ENCODE measurements at regions of chr3 and their contacts with region 1.

Region 1: GRCh38 chr3:15098503-15099363 is at the start of gene RBSN:
- DNase-seq: peak; percentile 95 to 96
- ATAC-seq: peak; percentile 77 to 91 (median 84)
- H3K4me3 ChIP-seq: peak within 1 kb of the TSS; percentile 68 to 97 (median 86)
- H3K27ac ChIP-seq: peak within 1 kb of the TSS; percentile 18 to 93 (median 86)
- H3K4me1 ChIP-seq: peaks cover 3 to 51% (median 37%) of the 10 kb centered on the region in 9 donors
- H3K27me3 ChIP-seq: no peaks in the 10 kb centered on the region
- CTCF ChIP-seq: no peak
- total RNA-seq, gene RBSN: 17.4 to 23.8 (median 21.2) TPM

Region 2: GRCh38 chr3:15064835-15065549 is 33.7 kb before region 1 on chr3 and contains the start of gene MRPS25:
- intact Hi-C with region 1: loop called in 1 of 10 experiments (anchors 2 kb)
- DNase-seq: peak; percentile 89 to 90
- ATAC-seq: peak; percentile 96 to 98 (median 98)
- H3K4me3 ChIP-seq: peak within 1 kb of the TSS; percentile 70 to 97 (median 82)
- H3K27ac ChIP-seq: peak within 1 kb of the TSS; percentile 69 to 91 (median 88)
- H3K4me1 ChIP-seq: peaks cover 6 to 24% (median 17%) of the 10 kb centered on the region in 9 donors
- H3K27me3 ChIP-seq: no peaks in the 10 kb centered on the region
- CTCF ChIP-seq: no peak
- total RNA-seq, gene MRPS25: 64.7 to 190 (median 92.8) TPM

Measured in heart right ventricle (tissue), 16 donors.